ENCODE measurements at regions of chr6 and their contacts with region 1.

Region 1: GRCh38 chr6:25027221-25027916 is 91.6 kb upstream of the RIPOR2 start:
- DNase-seq: peak; percentile 90
- ATAC-seq: peak; percentile 97
- H3K4me3 Mint-ChIP-seq: peak overlapping the region; percentile 56
- H3K27ac Mint-ChIP-seq: peak overlapping the region; percentile 73
- H3K4me1 Mint-ChIP-seq: peaks cover 37% of the 10 kb centered on the region
- H3K27me3 Mint-ChIP-seq: no peaks in the 10 kb centered on the region

Region 2: DNA sequence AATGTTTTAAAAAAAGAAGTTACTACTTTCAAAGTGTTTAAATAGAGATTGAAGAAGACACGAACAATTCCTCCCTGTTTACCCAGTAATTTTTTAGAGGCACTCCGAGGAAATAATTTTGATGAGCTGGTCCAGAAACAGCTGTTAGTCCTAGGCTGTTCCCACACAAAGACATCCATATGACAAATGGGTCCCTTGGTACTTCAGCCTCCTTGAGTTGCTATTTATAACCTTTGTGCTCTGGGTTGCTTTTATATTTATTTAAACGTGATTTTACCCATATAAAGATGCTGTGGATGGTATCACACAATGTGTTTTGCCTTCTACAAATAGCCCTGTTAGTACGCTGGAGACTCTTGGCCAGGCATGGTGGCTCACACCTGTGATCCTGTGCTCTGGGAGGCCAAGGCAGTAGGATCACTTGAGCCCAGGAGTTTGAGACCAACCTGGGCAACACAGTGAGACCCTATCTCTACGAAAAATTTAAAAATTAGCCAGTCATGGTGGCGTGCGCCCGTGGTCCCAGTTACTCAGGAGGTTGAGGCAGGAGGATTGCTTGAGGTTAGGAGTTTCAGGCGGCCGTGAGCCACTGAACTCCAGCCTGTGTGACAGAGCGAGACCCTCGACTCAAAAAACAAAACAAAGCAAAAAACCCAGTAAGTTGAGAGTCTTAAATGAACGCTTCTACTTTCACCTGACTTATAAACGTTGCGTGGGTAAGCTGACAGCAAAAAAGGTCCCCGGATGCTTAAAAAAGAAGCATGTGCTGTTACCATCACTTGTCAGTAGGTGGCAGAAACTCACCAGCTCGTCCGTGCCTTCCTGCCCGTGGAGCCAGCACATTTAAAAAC is 171.7 kb before region 1 on chr6:
- CTCF ChIA-PET with region 1: interaction called, 42 read pairs
- DNase-seq: peak; percentile 78
- ATAC-seq: peak; percentile 60
- H3K4me3 Mint-ChIP-seq: no peak overlapping the region
- H3K27ac Mint-ChIP-seq: peak overlapping the region; percentile 88
- H3K4me1 Mint-ChIP-seq: peaks cover 52% of the 10 kb centered on the region
- H3K27me3 Mint-ChIP-seq: no peaks in the 10 kb centered on the region

Region 3: GRCh38 chr6:25006565-25007001 is 20.8 kb before region 1 on chr6:
- CTCF ChIA-PET with region 1: interaction called, 22 read pairs
- DNase-seq: peak; percentile 85
- ATAC-seq: peak; percentile 79
- H3K4me3 Mint-ChIP-seq: peak overlapping the region; percentile 38
- H3K27ac Mint-ChIP-seq: peak overlapping the region; percentile 96
- H3K4me1 Mint-ChIP-seq: peaks cover 66% of the 10 kb centered on the region
- H3K27me3 Mint-ChIP-seq: no peaks in the 10 kb centered on the region

Region 4: GRCh38 chr6:25042036-25042521 is 14.7 kb after region 1 on chr6:
- CTCF ChIA-PET with region 1: interaction called, 36 read pairs
- DNase-seq: peak; percentile 64
- ATAC-seq: peak; percentile 63
- H3K4me3 Mint-ChIP-seq: peak overlapping the region; percentile 94
- H3K27ac Mint-ChIP-seq: peak overlapping the region; percentile 92
- H3K4me1 Mint-ChIP-seq: peaks cover 49% of the 10 kb centered on the region
- H3K27me3 Mint-ChIP-seq: no peaks in the 10 kb centered on the region

Region 5: GRCh38 chr6:25053875-25054371 is 26.6 kb after region 1 on chr6:
- CTCF ChIA-PET with region 1: interaction called, 42 read pairs
- DNase-seq: no peak
- ATAC-seq: peak; percentile 16
- H3K4me3 Mint-ChIP-seq: no peak overlapping the region
- H3K27ac Mint-ChIP-seq: peak overlapping the region; percentile 71
- H3K4me1 Mint-ChIP-seq: peaks cover 73% of the 10 kb centered on the region
- H3K27me3 Mint-ChIP-seq: no peaks in the 10 kb centered on the region